Activated B cell treated with CpG ODN at 0.5 μM for 24 hours (primary cell): ENCODE measurements at regions of chr4 and their contacts with region 1.

Region 1: DNA sequence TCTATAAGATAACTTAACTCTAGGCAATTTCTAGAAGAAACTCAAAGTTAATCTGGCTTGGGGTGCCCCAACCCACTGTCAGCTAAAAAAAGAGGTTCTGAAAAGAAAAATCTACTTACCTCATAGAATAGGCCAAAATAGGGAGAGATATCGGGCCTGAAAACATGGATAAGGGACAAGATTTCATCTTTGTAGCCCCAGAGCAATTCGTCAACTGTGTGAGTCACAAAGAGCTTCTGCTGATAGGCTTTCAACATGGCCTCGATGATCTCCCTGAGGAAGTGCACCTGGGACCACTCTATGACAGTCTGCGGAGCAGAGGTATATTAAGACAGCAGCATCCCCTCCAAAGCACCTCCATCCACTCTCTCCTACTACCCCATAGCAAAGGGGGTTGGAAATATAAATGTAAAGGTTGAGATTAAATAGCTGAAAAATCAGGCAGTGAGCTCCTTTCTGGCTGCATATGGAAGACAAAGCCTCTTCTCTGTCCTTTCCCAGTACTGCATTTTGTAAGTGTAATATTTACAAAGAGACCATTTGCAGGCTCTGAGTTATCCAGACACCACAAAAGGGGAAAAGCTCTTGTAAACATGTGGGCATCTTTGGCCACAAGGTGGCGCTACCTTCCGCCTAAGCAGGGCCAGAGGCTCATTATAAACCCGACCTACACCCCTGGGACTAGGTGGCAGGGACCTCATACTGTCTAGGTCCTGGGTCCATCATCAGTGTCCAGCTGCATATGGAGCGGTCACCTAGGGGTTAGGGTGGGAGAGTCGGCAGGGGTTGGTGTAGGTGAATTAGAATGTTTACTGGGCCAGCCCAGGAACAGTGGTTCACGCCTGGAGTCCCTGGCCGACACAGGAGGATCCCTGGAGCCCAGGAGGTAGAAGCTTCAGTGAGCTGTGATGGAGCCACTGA is 31.5 kb upstream of the NUP54 start:
- DNase-seq: peak; percentile 62
- ATAC-seq: peak; percentile 79
- H3K4me3 Mint-ChIP-seq: no peak overlapping the region
- H3K27ac Mint-ChIP-seq: no peak overlapping the region
- H3K4me1 Mint-ChIP-seq: peaks cover 5% of the 10 kb centered on the region
- H3K27me3 Mint-ChIP-seq: no peaks in the 10 kb centered on the region
- CTCF ChIP-seq: peak; percentile 76

Region 2: GRCh38 chr4:76198411-76199237 is 19.0 kb after region 1 on chr4:
- CTCF ChIA-PET with region 1: interaction called, 26 read pairs
- POLR2A ChIA-PET with region 1: no interaction called
- intact Hi-C with region 1: no loop called
- DNase-seq: no peak
- ATAC-seq: no peak
- H3K4me3 Mint-ChIP-seq: peak overlapping the region; percentile 1
- H3K27ac Mint-ChIP-seq: peak overlapping the region; percentile 51
- H3K4me1 Mint-ChIP-seq: peaks cover 58% of the 10 kb centered on the region
- H3K27me3 Mint-ChIP-seq: no peaks in the 10 kb centered on the region
- CTCF ChIP-seq: no peak

Region 3: GRCh38 chr4:76251441-76252270 is 72.0 kb after region 1 on chr4 and contains the start of gene FAM47E:
- CTCF ChIA-PET with region 1: interaction called, 5 read pairs
- POLR2A ChIA-PET with region 1: no interaction called
- intact Hi-C with region 1: loop called (anchors 5 kb)
- DNase-seq: peak; percentile 24
- ATAC-seq: peak; percentile 70
- H3K4me3 Mint-ChIP-seq: peak within 1 kb of the TSS; percentile 76
- H3K27ac Mint-ChIP-seq: no peak within 1 kb of the TSS
- H3K4me1 Mint-ChIP-seq: peaks cover 6% of the 10 kb centered on the region
- H3K27me3 Mint-ChIP-seq: peaks cover 58% of the 10 kb centered on the region
- CTCF ChIP-seq: no peak
- total RNA-seq, gene FAM47E: 0.39 TPM in 1 of 2 replicates, not detected in the other

Region 4: GRCh38 chr4:76430519-76431388 is 251.1 kb after region 1 on chr4:
- CTCF ChIA-PET with region 1: interaction called, 12 read pairs
- POLR2A ChIA-PET with region 1: no interaction called
- intact Hi-C with region 1: loop called (anchors 5 kb)
- DNase-seq: no peak
- ATAC-seq: peak; percentile 25
- H3K4me3 Mint-ChIP-seq: no peak overlapping the region
- H3K27ac Mint-ChIP-seq: no peak overlapping the region
- H3K4me1 Mint-ChIP-seq: peaks cover 13% of the 10 kb centered on the region
- H3K27me3 Mint-ChIP-seq: peaks cover 9% of the 10 kb centered on the region
- CTCF ChIP-seq: peak; percentile 62

Region 5: DNA sequence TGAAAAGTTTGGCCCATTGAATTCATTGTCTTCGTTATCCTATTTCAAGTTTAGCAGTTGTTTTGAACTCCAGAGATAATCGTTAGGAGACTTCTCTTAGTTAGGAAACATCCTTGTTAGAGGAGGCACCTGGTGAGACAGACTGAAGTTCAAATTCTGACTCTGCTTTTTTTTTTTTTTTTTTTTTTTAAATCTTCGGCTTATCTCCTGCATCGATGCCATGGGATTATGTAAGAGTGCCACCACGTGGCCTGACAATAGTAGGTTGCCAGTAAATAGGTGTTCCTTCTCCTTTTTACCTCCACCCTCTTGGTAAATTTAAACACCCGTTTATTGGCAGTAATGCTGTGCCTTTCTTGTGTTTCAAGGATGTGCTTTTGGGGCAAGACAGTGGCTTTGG is 569.0 kb after region 1 on chr4:
- CTCF ChIA-PET with region 1: interaction called, 3 read pairs
- POLR2A ChIA-PET with region 1: no interaction called
- intact Hi-C with region 1: loop called (anchors 5 kb)
- DNase-seq: no peak
- ATAC-seq: peak; percentile 21
- H3K4me3 Mint-ChIP-seq: no peak overlapping the region
- H3K27ac Mint-ChIP-seq: no peak overlapping the region
- H3K4me1 Mint-ChIP-seq: no peaks in the 10 kb centered on the region
- H3K27me3 Mint-ChIP-seq: peaks cover 3% of the 10 kb centered on the region
- CTCF ChIP-seq: no peak

Region 6: GRCh38 chr4:77308843-77309242 is 1129.2 kb after region 1 on chr4:
- CTCF ChIA-PET with region 1: interaction called, 3 read pairs
- POLR2A ChIA-PET with region 1: no interaction called
- intact Hi-C with region 1: loop called (anchors 2 kb)
- DNase-seq: no peak
- ATAC-seq: peak; percentile 40
- H3K4me3 Mint-ChIP-seq: no peak overlapping the region
- H3K27ac Mint-ChIP-seq: no peak overlapping the region
- H3K4me1 Mint-ChIP-seq: no peaks in the 10 kb centered on the region
- H3K27me3 Mint-ChIP-seq: no peaks in the 10 kb centered on the region
- CTCF ChIP-seq: no peak